Left cardiac atrium (tissue), 4 donors: ENCODE measurements at regions of chr15 and their contacts with region 1.

Region 1: DNA sequence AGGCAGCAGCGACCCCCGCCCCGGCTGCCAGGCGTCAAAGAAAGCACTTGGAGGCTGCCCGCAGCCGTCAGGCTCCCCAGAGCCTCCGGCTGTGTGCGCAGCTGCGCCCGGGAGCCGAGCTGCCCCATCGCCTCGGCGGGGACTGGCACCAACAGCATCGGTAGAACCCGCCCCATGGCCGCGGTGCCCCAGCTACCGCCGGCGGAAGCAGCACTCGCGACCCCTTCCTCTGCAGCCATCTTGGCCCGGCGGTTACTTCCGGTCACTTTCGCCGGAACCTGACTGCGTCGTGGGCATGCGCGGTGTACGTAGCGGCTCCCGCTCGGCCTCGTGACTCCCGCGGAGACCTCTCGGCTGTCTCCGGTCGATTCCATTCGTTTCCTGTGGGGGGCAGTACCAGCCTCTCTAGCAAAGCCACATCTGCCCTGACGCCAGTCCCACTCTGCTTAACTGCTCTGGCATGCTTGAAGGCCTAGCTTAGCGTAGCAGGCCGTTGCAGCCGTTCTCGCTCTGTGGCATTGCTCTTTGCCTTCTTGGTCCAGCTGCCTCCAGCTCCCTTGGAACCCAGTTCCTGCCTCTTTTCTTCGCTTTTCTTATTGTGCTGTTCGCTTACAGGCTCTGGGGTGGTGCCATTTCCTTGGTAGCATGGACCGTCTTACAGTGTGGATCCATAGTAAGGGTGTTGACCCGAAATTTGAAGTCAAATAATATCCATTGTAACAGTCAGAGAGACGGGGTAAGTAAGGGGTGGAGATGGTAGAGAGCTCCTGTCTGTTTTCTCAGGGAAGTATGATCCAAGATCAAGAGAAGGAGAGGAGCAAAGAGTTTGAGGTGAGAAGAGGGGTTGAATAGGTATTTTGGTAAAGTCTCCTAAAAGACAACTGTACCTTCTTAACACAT is at the start of gene SPG11:
- DNase-seq: peak; percentile 98
- ATAC-seq: peak; percentile 98 to 99
- total RNA-seq, gene SPG11: 42.9 to 46.7 TPM

Region 2: GRCh38 chr15:44570361-44570760 is 93.3 kb before region 1 on chr15:
- intact Hi-C with region 1: no loop called
- DNase-seq: no peak
- ATAC-seq: no peak

Region 3: DNA sequence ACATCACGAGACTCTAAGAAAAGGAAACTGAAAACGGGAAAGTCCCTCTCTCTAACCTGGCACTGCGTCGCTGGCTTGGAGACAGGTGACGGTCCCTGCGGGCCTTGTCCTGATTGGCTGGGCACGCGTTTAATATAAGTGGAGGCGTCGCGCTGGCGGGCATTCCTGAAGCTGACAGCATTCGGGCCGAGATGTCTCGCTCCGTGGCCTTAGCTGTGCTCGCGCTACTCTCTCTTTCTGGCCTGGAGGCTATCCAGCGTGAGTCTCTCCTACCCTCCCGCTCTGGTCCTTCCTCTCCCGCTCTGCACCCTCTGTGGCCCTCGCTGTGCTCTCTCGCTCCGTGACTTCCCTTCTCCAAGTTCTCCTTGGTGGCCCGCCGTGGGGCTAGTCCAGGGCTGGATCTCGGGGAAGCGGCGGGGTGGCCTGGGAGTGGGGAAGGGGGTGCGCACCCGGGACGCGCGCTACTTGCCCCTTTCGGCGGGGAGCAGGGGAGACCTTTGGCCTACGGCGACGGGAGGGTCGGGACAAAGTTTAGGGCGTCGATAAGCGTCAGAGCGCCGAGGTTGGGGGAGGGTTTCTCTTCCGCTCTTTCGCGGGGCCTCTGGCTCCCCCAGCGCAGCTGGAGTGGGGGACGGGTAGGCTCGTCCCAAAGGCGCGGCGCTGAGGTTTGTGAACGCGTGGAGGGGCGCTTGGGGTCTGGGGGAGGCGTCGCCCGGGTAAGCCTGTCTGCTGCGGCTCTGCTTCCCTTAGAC is 47.9 kb after region 1 on chr15 and contains the start of gene B2M:
- intact Hi-C with region 1: loop called in 1 of 2 experiments (anchors 1 kb)
- DNase-seq: peak; percentile 96
- ATAC-seq: peak; percentile 95 to 96
- total RNA-seq, gene B2M: 1,362 to 1,570 TPM

Region 4: GRCh38 chr15:44728576-44729407 is 65.1 kb after region 1 on chr15:
- intact Hi-C with region 1: loop called in 1 of 2 experiments (anchors 5 kb)
- DNase-seq: peak; percentile 96
- ATAC-seq: peak; percentile 96

Region 5: GRCh38 chr15:44738340-44738984 is 74.8 kb after region 1 on chr15:
- intact Hi-C with region 1: loop called (anchors 5 kb)
- DNase-seq: no peak
- ATAC-seq: peak; percentile 25 to 40

Region 6: GRCh38 chr15:45091161-45091560 is 427.5 kb after region 1 on chr15:
- intact Hi-C with region 1: no loop called
- DNase-seq: no peak
- ATAC-seq: no peak